IMR-90 (cell line): ENCODE measurements at regions of chr4 and their contacts with region 1.

Region 1: GRCh38 chr4:110631584-110632505 is 9.0 kb upstream of the PITX2 start:
- DNase-seq: peak; percentile 84
- ATAC-seq: peak; percentile 95
- H3K4me3 ChIP-seq: peak overlapping the region; percentile 34
- H3K27ac ChIP-seq: no peak overlapping the region
- H3K4me1 ChIP-seq: 0 out of 2 replicates have a peak, but pooled peaks cover 2% of the 10 kb centered on the region
- H3K27me3 ChIP-seq: peaks cover 78% of the 10 kb centered on the region
- CTCF ChIP-seq: peak; percentile 96
- POLR2A ChIP-seq: 0 out of 2 replicates have a peak, but pooled peaks have one; percentile 32
- RAD21 ChIP-seq: peak; percentile 98

Region 2: DNA sequence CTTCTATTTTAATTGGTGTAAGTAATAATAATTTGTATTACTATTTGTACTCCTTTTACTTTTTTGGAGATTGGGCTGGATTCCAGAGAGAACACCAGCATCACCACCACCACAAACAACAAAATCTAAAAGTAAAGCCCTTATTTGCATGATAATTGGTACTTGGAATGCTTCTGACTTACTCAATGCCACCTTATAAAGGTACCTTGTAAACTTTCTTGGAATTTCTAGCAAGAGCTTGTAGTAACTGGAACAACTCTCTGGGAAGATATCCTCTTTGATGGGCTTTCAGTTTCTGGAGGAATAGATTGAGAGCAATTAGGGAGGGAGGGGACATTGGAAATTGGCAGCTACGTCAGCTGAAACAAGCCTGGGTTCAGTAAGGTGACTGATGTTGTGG is 11.3 kb after region 1 on chr4:
- CTCF ChIA-PET with region 1: no interaction called
- POLR2A ChIA-PET with region 1: no interaction called
- dilution Hi-C with region 1: no loop called
- in situ Hi-C with region 1: no loop called
- intact Hi-C with region 1: no loop called
- DNase-seq: no peak
- ATAC-seq: no peak
- H3K4me3 ChIP-seq: no peak overlapping the region
- H3K27ac ChIP-seq: no peak overlapping the region
- H3K4me1 ChIP-seq: no peaks in the 10 kb centered on the region
- H3K27me3 ChIP-seq: peaks cover 49% of the 10 kb centered on the region
- CTCF ChIP-seq: no peak
- POLR2A ChIP-seq: no peak
- RAD21 ChIP-seq: no peak

Region 3: DNA sequence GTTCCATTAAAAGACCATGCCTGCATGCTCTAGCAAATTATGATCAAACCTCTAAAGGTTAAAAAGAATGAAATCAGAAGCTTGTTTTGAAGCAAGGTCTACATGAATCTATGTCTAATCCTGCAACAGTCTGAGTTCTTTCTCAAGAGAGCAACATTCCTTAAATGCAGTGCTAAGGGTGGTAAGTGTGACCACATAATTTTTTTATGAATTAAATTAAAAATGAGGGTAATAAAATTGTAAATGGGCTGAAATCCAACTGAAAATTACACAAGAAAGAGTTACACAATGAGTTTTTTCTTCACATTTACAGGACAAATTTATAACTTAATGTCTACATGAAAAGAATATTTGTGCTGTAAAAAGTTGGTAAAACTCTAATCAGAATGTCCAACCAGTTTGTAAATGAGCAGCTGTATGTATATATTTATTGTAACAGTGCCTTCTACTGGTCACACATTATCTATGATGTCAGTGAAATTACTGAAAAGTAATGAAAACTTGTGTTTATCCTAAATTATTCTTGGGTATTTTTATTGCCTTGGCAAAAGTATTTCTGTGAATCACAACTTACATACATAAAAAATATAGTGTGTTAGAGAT is 327.3 kb after region 1 on chr4:
- CTCF ChIA-PET with region 1: interaction called, 4 read pairs
- POLR2A ChIA-PET with region 1: no interaction called
- dilution Hi-C with region 1: no loop called
- in situ Hi-C with region 1: loop called (anchors 5 kb)
- intact Hi-C with region 1: loop called (anchors 1 kb)
- DNase-seq: peak; percentile 30
- ATAC-seq: peak; percentile 66; the same call in 1 of the 2 replicates
- H3K4me3 ChIP-seq: no peak overlapping the region
- H3K27ac ChIP-seq: no peak overlapping the region
- H3K4me1 ChIP-seq: no peaks in the 10 kb centered on the region
- H3K27me3 ChIP-seq: peaks cover 2% of the 10 kb centered on the region; the same call in 1 of the 2 replicates
- CTCF ChIP-seq: peak; percentile 50
- POLR2A ChIP-seq: no peak
- RAD21 ChIP-seq: peak; percentile 48

Region 4: GRCh38 chr4:111037591-111038360 is 405.9 kb after region 1 on chr4:
- CTCF ChIA-PET with region 1: no interaction called
- POLR2A ChIA-PET with region 1: no interaction called
- dilution Hi-C with region 1: no loop called
- in situ Hi-C with region 1: no loop called
- intact Hi-C with region 1: no loop called
- DNase-seq: no peak
- ATAC-seq: no peak
- H3K4me3 ChIP-seq: no peak overlapping the region
- H3K27ac ChIP-seq: no peak overlapping the region
- H3K4me1 ChIP-seq: no peaks in the 10 kb centered on the region
- H3K27me3 ChIP-seq: no peaks in the 10 kb centered on the region
- CTCF ChIP-seq: no peak
- POLR2A ChIP-seq: no peak
- RAD21 ChIP-seq: no peak

Region 5: GRCh38 chr4:111283061-111283677 is 651.3 kb after region 1 on chr4:
- CTCF ChIA-PET with region 1: no interaction called
- POLR2A ChIA-PET with region 1: no interaction called
- dilution Hi-C with region 1: no loop called
- in situ Hi-C with region 1: loop called (anchors 25 kb)
- intact Hi-C with region 1: loop called (anchors 1 kb)
- DNase-seq: peak; percentile 57
- ATAC-seq: 0 out of 2 replicates have a peak, but pooled peaks have one; percentile 44
- H3K4me3 ChIP-seq: no peak overlapping the region
- H3K27ac ChIP-seq: no peak overlapping the region
- H3K4me1 ChIP-seq: no peaks in the 10 kb centered on the region
- H3K27me3 ChIP-seq: no peaks in the 10 kb centered on the region
- CTCF ChIP-seq: peak; percentile 70
- POLR2A ChIP-seq: no peak
- RAD21 ChIP-seq: peak; percentile 60

Region 6: DNA sequence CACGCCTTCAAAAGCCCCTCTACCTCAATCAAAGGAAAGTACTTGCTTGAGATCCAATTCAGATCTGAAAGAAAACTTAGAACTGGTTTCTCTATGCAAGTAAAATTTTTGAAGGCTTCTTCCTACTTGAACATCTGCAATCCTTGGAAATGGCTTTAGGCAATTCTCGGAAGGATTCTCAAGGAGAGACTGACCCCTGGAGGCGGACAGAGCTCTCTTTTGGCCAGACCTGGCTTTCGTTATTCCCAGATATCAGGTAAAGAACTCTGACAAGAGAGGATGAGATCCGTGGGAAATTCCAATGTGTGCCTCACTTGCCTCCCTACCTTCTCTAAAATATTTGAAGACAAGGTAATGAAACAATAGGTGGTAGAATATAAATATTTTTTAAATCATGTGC is 843.2 kb after region 1 on chr4:
- CTCF ChIA-PET with region 1: no interaction called
- POLR2A ChIA-PET with region 1: no interaction called
- dilution Hi-C with region 1: no loop called
- in situ Hi-C with region 1: no loop called
- intact Hi-C with region 1: loop called (anchors 2 kb)
- DNase-seq: peak; percentile 39
- ATAC-seq: no peak
- H3K4me3 ChIP-seq: no peak overlapping the region
- H3K27ac ChIP-seq: no peak overlapping the region
- H3K4me1 ChIP-seq: no peaks in the 10 kb centered on the region
- H3K27me3 ChIP-seq: no peaks in the 10 kb centered on the region
- CTCF ChIP-seq: peak; percentile 38
- POLR2A ChIP-seq: no peak
- RAD21 ChIP-seq: peak; percentile 53

Region 7: DNA sequence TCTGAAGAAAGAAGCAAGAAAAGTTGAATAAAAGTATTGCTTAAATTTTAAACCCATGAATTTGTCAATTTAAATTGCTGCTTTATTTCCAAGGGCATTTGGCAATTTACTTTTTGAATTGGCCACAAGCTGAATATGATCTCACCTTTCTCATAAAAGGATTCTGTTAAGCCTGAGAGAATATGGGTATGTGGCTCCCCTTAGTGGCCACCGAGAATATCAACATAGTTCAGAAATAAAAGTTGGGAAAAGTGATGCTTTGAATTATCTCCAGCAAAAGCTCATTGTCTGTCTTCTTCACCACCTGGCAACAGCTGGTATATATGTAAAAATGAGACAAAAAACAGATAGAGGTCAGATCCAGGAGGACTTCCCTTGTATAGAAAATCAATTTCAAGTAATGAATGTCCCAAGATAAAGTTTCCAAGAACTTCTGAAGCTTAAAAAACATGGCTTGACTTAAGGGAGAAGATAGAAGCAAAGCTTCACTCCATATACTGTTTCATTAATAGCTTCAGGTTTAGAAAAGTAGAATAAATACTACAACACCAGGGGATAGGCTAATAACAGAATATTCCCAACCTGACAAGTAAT is 1222.7 kb after region 1 on chr4:
- CTCF ChIA-PET with region 1: no interaction called
- POLR2A ChIA-PET with region 1: no interaction called
- dilution Hi-C with region 1: no loop called
- in situ Hi-C with region 1: no loop called
- intact Hi-C with region 1: loop called (anchors 5 kb)
- DNase-seq: peak; percentile 30
- ATAC-seq: peak; percentile 69
- H3K4me3 ChIP-seq: no peak overlapping the region
- H3K27ac ChIP-seq: no peak overlapping the region
- H3K4me1 ChIP-seq: no peaks in the 10 kb centered on the region
- H3K27me3 ChIP-seq: no peaks in the 10 kb centered on the region
- CTCF ChIP-seq: peak; percentile 64
- POLR2A ChIP-seq: no peak
- RAD21 ChIP-seq: peak; percentile 63